Activated naive CD4-positive, alpha-beta T cell treated with anti-CD3 and anti-CD28 coated beads for 36 hours (primary cell): ENCODE measurements at regions of chr10 and their contacts with region 1.

Region 1: DNA sequence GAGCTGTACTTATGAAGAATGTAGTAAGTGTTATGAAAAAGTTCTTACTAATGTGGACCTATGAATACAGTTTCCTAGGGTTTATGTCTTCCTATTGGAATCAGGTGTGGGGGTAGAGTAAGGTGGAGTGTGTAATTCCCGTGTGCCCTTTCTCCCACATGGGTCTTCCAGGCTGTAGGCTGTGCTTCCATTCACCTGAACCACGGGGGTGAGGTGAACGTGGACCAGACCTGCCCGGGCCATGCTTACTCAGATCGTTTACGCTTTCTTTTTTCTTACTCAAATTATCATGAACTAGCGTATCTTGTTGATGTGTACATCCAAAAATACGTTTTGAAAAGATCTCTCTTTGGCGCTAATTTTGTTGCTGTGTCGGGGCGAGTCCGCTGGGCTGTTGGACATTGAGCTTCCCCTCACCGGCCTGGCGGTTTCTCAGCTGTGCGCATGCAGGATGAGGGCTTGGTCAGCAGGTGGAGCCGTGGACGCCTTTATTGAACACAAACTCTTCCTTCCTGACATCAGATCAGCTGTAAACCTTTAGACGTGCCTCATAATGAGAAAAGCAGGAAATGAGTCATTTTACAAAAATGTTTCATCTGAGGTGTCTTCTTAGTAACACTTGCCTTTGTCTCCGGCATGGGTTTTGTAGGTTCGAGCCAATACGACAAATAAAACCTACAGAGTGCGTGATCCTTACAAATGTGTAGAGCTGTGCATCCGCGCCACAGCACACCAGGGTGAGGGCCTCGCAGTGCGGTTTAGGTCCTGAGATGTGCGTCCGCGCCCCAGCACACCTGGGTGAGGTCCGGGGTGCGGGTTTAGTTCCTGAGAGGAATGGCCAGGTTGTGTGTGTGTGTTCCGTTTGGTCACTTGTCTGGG is 53.8 kb downstream of the WDR37 start:
- DNase-seq: peak; percentile 90
- H3K4me3 Mint-ChIP-seq: peak overlapping the region; percentile 30
- H3K27ac Mint-ChIP-seq: peak overlapping the region; percentile 78
- H3K4me1 Mint-ChIP-seq: peaks cover 30% of the 10 kb centered on the region
- H3K27me3 Mint-ChIP-seq: no peaks in the 10 kb centered on the region

Region 2: GRCh38 chr10:1094112-1095057 is 15.6 kb before region 1 on chr10:
- CTCF ChIA-PET with region 1: interaction called, 4 read pairs
- intact Hi-C with region 1: loop called (anchors 1 kb)
- DNase-seq: peak; percentile 75
- H3K4me3 Mint-ChIP-seq: no peak overlapping the region
- H3K27ac Mint-ChIP-seq: no peak overlapping the region
- H3K4me1 Mint-ChIP-seq: peaks cover under 1% of the 10 kb centered on the region
- H3K27me3 Mint-ChIP-seq: no peaks in the 10 kb centered on the region

Region 3: GRCh38 chr10:1184541-1185430 is 74.8 kb after region 1 on chr10:
- CTCF ChIA-PET with region 1: no interaction called
- intact Hi-C with region 1: no loop called
- DNase-seq: no peak
- H3K4me3 Mint-ChIP-seq: no peak overlapping the region
- H3K27ac Mint-ChIP-seq: no peak overlapping the region
- H3K4me1 Mint-ChIP-seq: no peaks in the 10 kb centered on the region
- H3K27me3 Mint-ChIP-seq: no peaks in the 10 kb centered on the region

Region 4: GRCh38 chr10:1327759-1328158 is 217.7 kb after region 1 on chr10:
- CTCF ChIA-PET with region 1: no interaction called
- intact Hi-C with region 1: loop called (anchors 2 kb)
- DNase-seq: no peak
- H3K4me3 Mint-ChIP-seq: no peak overlapping the region
- H3K27ac Mint-ChIP-seq: no peak overlapping the region
- H3K4me1 Mint-ChIP-seq: peaks cover 8% of the 10 kb centered on the region
- H3K27me3 Mint-ChIP-seq: peaks cover under 1% of the 10 kb centered on the region

Region 5: DNA sequence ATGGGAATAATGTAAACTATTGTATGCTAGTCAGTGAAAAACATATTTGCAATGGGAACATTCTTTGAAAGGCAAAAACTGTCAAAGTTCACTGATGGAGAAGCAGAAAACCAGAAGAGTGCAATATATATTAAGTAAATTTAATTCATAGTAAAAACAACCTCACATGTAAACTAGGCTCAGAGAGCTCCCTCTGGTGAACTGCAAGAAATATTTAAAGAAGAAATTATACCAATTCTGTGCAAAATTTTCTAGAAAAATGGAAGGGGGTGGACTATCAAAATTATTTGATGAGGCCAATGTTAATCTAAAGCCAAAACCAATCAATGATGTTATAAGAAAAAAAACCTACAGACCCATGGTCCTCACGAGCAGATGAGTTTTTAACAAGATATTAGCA is 277.4 kb after region 1 on chr10:
- CTCF ChIA-PET with region 1: no interaction called
- intact Hi-C with region 1: loop called (anchors 2 kb)
- DNase-seq: no peak
- H3K4me3 Mint-ChIP-seq: no peak overlapping the region
- H3K27ac Mint-ChIP-seq: no peak overlapping the region
- H3K4me1 Mint-ChIP-seq: no peaks in the 10 kb centered on the region
- H3K27me3 Mint-ChIP-seq: no peaks in the 10 kb centered on the region

Region 6: DNA sequence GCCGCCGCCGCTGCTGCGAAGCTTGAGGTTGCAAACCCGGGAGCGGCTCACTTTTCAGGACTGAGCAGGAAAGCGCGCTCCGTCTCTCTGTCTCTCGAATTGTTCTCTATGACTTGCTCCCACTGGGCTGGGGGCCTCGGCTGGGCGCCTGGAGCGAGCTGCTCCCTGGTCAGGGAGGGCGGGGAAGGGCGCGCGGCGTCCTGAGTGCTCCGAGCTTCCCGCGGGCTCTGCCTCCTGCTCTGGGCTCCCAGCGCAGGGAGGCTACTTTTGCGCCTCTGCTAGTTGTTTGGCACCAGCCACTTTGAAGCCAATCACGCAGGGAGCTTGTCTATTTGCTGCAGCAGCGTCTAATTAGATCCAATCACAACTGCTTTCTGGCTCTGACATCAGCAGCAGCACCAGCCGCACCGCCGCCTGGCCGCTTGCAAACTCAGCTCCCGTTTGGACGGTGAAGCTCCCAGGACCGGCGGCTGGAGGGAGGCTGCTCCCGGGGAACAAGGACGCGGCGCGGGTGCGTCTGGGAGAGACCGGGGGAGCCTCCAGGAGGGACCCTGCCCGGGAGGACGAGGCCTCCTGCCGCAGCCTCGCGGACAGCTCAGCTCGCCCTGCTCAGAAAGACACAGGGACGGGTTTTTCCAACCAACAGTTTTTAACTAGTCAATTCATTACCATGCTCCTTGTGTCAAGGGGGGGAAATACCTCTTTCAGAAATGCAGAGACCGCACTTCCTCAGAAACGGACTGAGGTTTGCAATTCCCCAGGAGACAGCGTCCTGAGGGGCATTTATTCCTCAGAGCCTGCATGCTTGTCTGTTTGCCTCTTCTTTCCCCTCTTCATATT is 627.4 kb after region 1 on chr10 and contains the start of gene ADARB2:
- CTCF ChIA-PET with region 1: no interaction called
- intact Hi-C with region 1: loop called (anchors 10 kb)
- DNase-seq: peak; percentile 44
- H3K4me3 Mint-ChIP-seq: peak within 1 kb of the TSS; percentile 60
- H3K27ac Mint-ChIP-seq: no peak within 1 kb of the TSS
- H3K4me1 Mint-ChIP-seq: peaks cover 19% of the 10 kb centered on the region
- H3K27me3 Mint-ChIP-seq: peaks cover 75% of the 10 kb centered on the region
- total RNA-seq, gene ADARB2: 1.3 to 1.4 TPM